ENCODE measurements at regions of chr15 and their contacts with region 1.

Region 1: GRCh38 chr15:90716976-90717821 is at the start of gene BLM:
- DNase-seq: peak; percentile 98
- H3K4me3 ChIP-seq: peak within 1 kb of the TSS; percentile 53 to 59 (median 57)
- H3K27ac ChIP-seq: peak within 1 kb of the TSS; percentile 83 to 90 (median 86)
- H3K4me1 ChIP-seq: peaks cover 0 to 14% (median 7%) of the 10 kb centered on the region in 4 donors
- H3K27me3 ChIP-seq: no peaks in the 10 kb centered on the region
- CTCF ChIP-seq: peak; percentile 36 to 77 (median 53)
- EP300 ChIP-seq: no peak
- POLR2A ChIP-seq: peak in 1 of 2 donors; percentile 15
- total RNA-seq, gene BLM: 0.54 to 0.99 (median 0.71) TPM in 3 of 4 donors, not detected in the other

Region 2: DNA sequence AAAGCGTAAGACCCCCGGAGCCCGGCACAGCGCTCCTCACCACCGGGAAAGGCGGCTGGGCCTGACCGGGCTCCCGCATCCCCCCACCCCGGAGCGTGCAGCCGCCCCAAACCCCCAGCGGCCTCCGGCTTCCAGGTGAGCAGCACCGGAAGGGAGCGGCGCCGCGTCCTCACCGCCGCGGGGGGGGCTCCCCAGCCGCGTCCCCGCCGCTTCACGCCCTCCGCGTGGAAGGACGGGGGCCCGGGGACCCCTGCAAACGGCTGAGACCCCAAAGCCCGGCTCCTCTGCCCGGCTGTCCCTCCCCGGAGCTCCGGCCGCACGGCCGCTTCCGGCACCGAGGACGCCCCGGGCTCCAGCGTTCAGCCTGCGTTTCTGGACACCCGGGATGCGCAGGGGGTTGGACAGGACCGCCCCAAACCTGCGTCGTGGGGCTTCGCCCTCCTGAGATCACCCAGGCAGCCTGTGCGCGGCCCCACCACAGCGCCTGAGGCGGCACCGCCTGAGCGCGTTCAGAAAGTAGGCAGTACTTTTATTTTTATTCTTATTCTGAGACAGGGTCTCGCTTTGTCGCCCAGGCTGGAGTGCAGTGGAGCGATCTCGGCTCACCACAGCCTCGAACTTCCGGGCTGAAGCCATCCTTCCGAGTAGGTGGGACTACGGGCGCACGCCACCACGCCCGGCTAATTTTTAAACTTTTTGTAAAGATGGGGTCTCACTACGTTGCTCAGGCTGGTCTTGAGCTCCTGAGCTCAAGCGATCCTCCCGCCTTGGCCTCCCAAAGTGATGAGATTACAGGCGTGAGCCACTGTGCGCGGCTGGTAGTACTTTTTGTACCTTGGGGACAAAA is 51.7 kb before region 1 on chr15:
- intact Hi-C with region 1: loop called (anchors 5 kb)
- DNase-seq: peak; percentile 83
- H3K4me3 ChIP-seq: peak overlapping the region; percentile 70 to 97 (median 82)
- H3K27ac ChIP-seq: peak overlapping the region; percentile 81 to 88 (median 88)
- H3K4me1 ChIP-seq: peaks cover 0 to 13% (median 8%) of the 10 kb centered on the region in 4 donors
- H3K27me3 ChIP-seq: no peaks in the 10 kb centered on the region
- CTCF ChIP-seq: no peak
- EP300 ChIP-seq: no peak
- POLR2A ChIP-seq: peak; percentile 22 to 28

Region 3: DNA sequence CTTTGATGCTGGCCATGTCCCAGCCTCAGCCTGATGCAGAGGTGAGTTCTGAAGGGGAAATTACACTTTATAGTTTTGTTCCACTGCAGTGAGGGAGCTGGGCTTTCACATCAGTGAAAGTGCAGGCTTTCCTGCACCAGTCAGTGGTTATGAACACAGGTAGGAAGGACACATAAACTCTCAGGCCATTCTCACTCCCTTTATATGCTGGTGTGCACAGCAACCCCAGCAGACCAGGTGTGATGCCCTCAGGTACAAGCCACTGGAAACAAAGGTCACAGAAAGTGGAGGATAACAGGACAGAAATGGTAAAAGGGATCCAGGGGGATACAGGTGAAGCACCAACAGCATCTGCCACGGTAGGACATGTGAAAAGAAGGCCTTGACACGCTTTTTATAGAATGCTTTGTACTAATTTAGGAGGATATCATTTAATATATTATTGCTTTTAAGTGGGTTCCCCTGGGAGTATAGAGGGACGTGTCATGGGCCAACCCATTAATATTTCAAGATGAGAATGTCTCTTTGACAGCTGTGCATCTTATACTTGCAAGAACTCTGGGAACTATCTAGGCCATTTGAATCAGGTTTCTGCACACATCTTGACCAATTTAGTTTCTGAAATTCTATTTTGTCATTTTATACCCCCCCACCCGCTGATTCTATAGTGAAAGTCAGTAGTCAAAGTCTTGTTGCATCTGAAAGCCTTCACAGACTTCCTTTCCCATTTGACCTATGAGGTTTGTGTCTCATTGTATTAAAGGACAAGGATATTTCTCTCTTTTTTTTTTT is 25.0 kb before region 1 on chr15:
- intact Hi-C with region 1: no loop called
- DNase-seq: no peak
- H3K4me3 ChIP-seq: no peak overlapping the region
- H3K27ac ChIP-seq: no peak overlapping the region
- H3K4me1 ChIP-seq: no peaks in the 10 kb centered on the region
- H3K27me3 ChIP-seq: no peaks in the 10 kb centered on the region
- CTCF ChIP-seq: no peak
- EP300 ChIP-seq: no peak
- POLR2A ChIP-seq: no peak

Region 4: DNA sequence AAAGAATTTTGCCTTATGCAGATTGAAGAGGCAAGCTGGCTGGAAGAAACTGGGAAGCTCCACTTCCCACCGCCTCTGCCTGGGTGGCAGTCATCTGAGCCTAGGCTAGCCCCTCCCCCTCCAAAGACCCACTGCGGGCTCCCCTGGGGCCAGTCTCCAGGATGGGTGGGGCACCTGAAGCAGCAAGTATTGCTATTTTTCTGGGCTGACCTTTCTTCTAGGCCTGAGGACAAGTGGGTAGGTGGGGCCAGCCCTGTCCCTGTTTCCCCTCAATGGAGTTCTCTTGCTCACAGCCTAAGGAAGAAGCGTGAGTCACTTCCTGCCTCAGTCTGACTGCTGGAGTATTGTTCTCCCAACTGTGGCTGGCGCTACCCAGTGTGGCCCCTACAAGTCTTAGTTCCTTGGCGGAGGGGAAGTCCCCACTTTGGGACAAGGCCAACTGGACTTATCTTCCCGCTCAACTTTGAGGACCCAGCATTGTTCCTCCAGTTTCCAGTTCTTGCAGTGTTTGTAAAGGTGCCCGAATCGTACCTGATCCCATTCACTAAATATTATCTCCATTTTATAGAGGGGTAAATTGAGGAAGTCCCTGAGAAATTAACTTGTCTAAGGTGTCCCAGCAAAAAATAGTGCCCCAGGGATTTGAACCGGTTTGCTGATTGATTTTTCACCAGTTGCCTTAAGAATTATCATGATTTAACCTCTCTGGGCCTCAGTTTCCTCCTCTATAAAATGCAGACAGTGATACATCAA is 152.6 kb after region 1 on chr15:
- intact Hi-C with region 1: loop called (anchors 5 kb)
- DNase-seq: peak; percentile 87
- H3K4me3 ChIP-seq: no peak overlapping the region
- H3K27ac ChIP-seq: peak overlapping the region; percentile 22 to 95 (median 93)
- H3K4me1 ChIP-seq: peaks cover 0 to 50% (median 31%) of the 10 kb centered on the region in 4 donors
- H3K27me3 ChIP-seq: no peaks in the 10 kb centered on the region
- CTCF ChIP-seq: no peak
- EP300 ChIP-seq: peak in 1 of 4 donors; percentile 3
- POLR2A ChIP-seq: no peak